ENCODE measurements at regions of chr19 and their contacts with region 1.

Region 1: DNA sequence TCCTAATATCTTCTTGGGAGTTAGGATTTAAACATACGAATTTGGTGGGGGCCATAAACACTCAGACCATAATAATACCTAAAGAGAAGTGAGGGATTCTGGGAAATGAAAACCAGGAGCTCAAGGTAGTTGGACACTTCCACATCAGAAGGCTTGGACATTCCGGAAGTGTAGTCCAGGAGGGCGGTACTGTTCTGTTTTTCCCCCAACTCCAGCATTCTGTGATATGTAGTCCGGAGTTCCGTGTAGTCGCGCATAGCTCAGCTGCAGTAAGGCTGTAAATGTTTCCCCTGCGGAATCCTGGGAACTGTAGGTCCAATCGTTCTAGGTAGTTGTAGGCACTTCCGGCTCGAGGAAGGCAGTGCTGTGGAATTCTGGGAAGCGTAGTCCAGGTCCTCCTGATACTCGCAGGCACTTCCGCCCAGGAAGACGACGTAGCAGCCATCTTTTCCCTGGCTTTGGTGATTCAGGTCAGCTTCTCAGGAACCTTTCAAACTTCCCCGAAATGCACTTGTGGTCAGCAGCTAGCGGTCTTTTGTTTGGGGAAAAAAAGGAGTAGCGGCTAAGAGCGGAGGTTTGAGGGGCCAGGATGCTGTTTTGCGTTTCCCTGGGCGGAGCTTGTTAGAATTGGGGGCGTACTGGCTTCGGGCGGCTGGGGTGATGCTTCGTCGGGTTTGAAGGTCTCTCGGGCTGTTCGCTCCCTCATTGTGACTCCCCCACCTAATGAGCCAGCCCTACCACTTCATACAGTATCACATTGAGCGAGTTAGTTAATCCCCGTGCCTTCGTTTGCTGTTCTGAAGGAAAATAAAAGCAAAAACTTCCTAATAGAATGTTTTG is at the start of gene ZNF226:
- DNase-seq: peak; percentile 83 to 96
- ATAC-seq: peak; percentile 99
- total RNA-seq, gene ZNF226: 16.1 to 20.3 TPM

Region 2: GRCh38 chr19:44131955-44132354 is 32.9 kb before region 1 on chr19:
- intact Hi-C with region 1: no loop called
- DNase-seq: no peak
- ATAC-seq: no peak

Region 3: DNA sequence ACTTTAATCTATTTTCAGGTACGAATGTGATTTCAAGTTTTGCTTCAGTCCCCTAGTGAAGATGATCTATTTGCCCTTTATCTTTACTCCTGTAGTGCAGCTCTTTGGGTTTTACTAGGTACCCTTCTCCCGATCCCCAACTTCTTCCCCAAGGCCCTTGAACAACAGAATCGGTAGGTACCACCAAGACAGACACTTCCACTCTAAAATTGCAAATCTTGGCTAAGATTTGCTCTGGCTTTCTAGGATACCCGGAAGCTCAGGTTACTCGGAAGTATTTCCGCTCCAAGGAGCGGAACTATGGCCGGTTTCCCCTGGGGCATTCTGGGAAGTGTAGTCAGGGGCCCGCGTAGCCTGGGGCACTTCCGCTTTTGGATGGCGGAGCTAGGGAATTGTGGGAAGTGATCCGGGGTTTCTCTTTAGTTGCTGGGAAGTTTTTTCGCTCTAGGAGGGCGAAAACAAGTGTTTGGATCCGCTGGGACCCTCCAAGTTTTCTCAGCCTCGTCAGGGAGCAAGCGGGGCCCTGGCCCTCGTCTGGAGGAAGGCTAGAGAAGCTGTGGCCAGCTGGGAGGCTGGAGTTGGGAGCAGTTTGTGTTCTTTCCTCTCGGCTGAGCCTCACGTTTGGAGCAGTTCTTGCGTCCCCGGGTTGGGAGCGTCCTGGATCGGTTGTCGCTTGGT is 42.4 kb after region 1 on chr19:
- intact Hi-C with region 1: loop called in 1 of 2 experiments (anchors 5 kb)
- DNase-seq: peak; percentile 86 to 93
- ATAC-seq: peak; percentile 97

Measured in left colon (tissue), 2 donors.